Stomach (tissue), 19 donors: ENCODE measurements at regions of chrX and their contacts with region 1.

Region 1: DNA sequence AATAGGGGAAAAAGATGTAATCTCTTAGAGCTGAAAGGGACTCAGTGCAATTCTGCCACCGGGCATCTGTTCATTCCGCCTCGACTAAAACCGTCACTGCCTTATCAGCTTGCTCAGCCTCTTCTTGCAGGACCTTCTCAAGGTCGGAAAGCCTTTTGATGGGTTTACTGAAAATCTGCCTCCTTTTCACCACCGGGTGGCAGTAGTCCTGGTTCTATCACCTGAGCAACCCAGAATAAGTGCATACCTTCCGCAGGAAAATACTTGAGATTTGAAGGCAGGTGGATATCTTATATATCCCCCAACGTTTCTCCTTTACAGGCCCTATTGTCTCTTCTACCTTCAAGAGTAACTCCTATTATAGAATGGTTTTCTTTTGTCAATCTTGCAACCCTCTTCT is 103.4 kb upstream of the PAK3 start:
- DNase-seq: peak; percentile 31 to 51
- H3K4me3 ChIP-seq: no peak overlapping the region
- H3K27ac ChIP-seq: no peak overlapping the region
- H3K4me1 ChIP-seq: no peaks in the 10 kb centered on the region
- H3K27me3 ChIP-seq: peaks cover 0 to 3% (median 0%) of the 10 kb centered on the region in 3 donors
- CTCF ChIP-seq: peak in 4 of 7 experiments; percentile 14 to 35 (median 28)
- EP300 ChIP-seq: no peak
- POLR2A ChIP-seq: no peak

Region 2: GRCh38 chrX:110853610-110854009 is 139.0 kb before region 1 on chrX:
- intact Hi-C with region 1: loop called (anchors 10 kb)
- DNase-seq: peak in 1 of 2 donors; percentile 47
- H3K4me3 ChIP-seq: no peak overlapping the region
- H3K27ac ChIP-seq: no peak overlapping the region
- H3K4me1 ChIP-seq: no peaks in the 10 kb centered on the region
- H3K27me3 ChIP-seq: peaks cover 0 to 5% (median 0%) of the 10 kb centered on the region in 3 donors
- CTCF ChIP-seq: peak in 3 of 7 experiments; percentile 17 to 37 (median 28)
- EP300 ChIP-seq: no peak
- POLR2A ChIP-seq: no peak

Region 3: DNA sequence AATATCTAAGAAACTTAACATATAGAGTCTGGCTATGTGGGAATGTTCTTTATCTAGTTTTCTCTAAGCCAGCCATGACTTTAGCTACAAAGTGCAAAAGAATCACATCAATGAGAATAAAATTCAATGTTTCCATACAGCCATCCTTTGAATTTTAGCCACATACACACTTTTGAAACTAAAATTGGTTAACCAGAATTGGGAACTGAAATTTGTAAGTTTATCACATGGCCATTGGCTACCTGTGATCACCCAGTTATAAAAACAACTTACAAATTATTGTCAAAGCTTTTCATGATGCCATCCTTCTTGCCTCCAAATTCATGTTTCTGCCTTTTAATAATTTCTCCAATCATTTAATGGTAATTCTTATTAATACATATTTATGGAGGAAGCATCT is 153.3 kb after region 1 on chrX:
- intact Hi-C with region 1: no loop called
- DNase-seq: no peak
- H3K4me3 ChIP-seq: no peak overlapping the region
- H3K27ac ChIP-seq: no peak overlapping the region
- H3K4me1 ChIP-seq: no peaks in the 10 kb centered on the region
- H3K27me3 ChIP-seq: peaks cover 0 to 6% (median 0%) of the 10 kb centered on the region in 3 donors
- CTCF ChIP-seq: no peak
- EP300 ChIP-seq: no peak
- POLR2A ChIP-seq: no peak

Region 4: GRCh38 chrX:111483134-111483533 is 490.5 kb after region 1 on chrX:
- intact Hi-C with region 1: no loop called
- DNase-seq: no peak
- H3K4me3 ChIP-seq: no peak overlapping the region
- H3K27ac ChIP-seq: no peak overlapping the region
- H3K4me1 ChIP-seq: no peaks in the 10 kb centered on the region
- H3K27me3 ChIP-seq: peaks cover 0 to 4% (median 0%) of the 10 kb centered on the region in 3 donors
- CTCF ChIP-seq: no peak
- EP300 ChIP-seq: no peak
- POLR2A ChIP-seq: no peak